ENCODE measurements at regions of chr9 and their contacts with region 1.

Region 1: DNA sequence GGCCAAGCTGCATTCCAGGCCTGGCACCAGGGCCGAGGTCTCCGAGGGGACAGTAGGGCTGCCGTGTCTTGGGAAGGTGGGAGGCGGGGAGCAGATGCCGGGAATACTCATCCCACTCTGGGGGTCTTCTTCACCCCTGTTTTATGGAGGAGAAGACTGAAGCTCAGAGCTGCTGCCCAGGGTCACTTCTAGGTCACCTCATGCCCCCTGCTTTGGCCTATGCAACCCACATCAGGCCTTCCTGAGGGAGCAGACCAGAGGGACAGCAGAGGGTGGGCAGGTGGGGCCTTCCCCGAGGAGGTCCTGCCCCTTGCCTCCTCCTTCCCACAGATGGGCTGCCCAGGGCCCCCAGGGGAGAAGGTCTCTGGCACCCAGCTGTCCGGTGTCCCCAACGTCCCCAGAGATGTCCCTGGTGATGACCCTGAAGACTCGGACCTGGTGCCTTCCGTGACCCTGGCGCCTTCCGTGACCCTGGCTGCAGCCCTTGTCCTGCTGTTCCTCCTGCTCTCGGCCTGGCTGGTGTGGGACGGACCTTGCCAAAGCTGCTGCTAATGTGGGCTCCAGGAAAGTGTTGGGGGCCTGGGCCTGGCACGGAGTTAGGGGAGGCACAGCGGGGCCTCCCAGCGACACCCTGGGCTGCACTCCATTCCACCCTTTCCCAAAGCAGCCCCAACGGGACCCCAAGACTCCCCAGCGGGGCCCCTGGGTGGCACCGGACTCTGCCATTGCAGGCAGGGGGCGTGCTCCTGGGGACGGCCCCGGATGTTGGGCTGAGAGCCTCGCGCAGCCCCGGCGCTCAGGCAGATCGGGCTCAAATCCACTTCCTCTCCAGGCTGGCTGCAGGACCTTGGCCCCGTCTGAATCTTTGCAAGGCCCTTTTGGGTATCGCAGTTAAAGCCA is 6.7 kb upstream of the SLC2A6 start:
- DNase-seq: no peak
- H3K4me3 ChIP-seq: no peak overlapping the region
- H3K27ac ChIP-seq: no peak overlapping the region
- H3K4me1 ChIP-seq: no peaks in the 10 kb centered on the region
- H3K27me3 ChIP-seq: peaks cover 0 to 15% of the 10 kb centered on the region in 2 donors
- CTCF ChIP-seq: no peak
- POLR2A ChIP-seq: no peak

Region 2: DNA sequence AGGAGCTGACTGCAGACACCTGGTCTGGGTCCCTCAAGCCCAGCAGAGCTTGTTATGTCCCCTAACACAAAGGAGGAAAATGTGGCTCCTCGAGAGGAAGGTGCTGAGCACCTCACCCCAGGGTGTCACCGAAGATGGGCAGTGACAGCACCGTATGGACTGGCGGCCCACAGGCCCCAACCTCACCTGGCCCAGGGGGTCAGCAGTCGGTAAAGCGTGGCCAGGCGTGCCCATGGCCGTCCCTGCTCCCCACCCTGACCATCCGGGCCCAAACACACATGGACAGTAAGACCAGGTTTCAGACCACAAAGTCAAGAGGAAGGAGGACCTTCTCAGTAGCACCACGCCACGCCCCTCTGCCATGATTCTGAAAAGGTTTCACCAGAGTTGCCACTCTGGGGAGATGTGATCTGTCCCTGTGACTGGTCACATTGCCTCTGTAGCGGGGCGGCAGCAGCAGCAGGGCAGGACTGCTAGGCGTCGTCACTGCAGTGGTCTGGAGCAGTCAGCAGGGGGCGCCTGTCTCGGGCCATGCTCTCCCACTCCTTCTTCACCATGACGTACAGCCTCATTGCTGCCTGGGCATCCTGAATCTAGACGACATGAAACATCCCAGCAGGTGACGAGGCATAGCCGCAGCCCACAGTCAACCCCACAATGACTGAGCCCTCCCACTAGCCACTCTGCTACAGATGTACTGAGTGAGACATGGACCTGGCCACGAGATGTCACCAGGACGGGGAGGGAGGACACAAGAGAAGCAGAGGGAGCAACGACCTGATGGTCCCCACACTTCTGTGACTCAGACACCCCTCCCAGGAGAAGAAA is 78.9 kb before region 1 on chr9:
- intact Hi-C with region 1: loop called (anchors 10 kb)
- DNase-seq: peak; percentile 57 to 79
- H3K4me3 ChIP-seq: no peak overlapping the region
- H3K27ac ChIP-seq: no peak overlapping the region
- H3K4me1 ChIP-seq: no peaks in the 10 kb centered on the region
- H3K27me3 ChIP-seq: no peaks in the 10 kb centered on the region
- CTCF ChIP-seq: peak; percentile 70 to 81 (median 80)
- POLR2A ChIP-seq: no peak

Region 3: DNA sequence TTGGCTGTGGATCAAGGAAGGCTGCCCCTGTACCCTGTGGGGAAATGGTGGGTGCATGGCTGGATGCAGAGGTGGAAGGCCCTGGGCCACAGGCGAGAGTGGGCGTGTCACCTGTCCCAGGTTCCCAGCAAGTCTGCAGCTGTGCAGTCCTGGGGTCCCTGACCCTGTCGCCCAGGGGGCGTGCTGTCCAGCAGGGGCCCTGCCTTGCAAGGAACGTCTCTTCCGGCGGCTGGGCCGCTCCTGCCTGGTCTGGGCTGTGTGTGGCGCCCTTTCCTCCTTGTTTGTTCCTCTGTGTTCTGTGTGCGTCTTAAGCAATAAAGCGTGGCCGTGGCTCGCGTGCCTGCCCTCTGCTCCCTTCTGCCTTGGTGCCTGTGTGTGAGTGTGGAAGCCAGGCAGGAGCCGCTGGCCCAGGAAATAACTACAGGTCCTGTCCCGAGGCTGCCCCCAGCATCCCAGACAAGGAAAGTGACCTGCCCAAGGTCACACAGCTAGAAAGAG is 15.1 kb before region 1 on chr9:
- intact Hi-C with region 1: no loop called
- DNase-seq: no peak
- H3K4me3 ChIP-seq: no peak overlapping the region
- H3K27ac ChIP-seq: no peak overlapping the region
- H3K4me1 ChIP-seq: no peaks in the 10 kb centered on the region
- H3K27me3 ChIP-seq: peaks cover 0 to 5% of the 10 kb centered on the region in 2 donors
- CTCF ChIP-seq: no peak
- POLR2A ChIP-seq: no peak